Activated CD8-positive, alpha-beta memory T cell treated with anti-CD3 and anti-CD28 coated beads, Interleukin-2, amount 10 ng/mL, durations not matched to agents 7 days and 5 days (primary cell): ENCODE measurements at regions of chr3 and their contacts with region 1.

Region 1: GRCh38 chr3:52220380-52221026 is 4.9 kb downstream of the TLR9 start:
- DNase-seq: peak; percentile 93
- ATAC-seq: peak; percentile 74
- H3K4me3 Mint-ChIP-seq: peak overlapping the region; percentile 48
- H3K27ac Mint-ChIP-seq: peak overlapping the region; percentile 77
- H3K4me1 Mint-ChIP-seq: peaks cover 87% of the 10 kb centered on the region
- H3K27me3 Mint-ChIP-seq: no peaks in the 10 kb centered on the region

Region 2: DNA sequence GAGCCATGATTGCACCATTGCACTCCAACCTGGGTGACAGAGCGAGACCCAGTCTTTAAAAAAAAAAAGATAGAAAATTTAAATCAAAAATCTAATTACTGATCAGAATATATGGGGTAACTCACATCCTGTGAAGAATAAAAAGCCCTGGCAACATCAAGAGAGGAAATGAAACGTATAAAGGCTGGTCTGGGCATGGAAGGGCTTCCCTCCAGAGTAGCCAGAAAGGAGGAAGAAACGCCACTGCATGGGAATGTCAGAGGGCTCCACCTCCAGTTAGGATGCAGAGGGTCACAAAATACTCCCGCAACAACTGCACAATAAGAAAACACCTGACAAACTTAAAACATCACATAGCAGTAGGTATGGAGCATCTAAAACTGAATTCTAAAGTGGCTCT is 312.5 kb before region 1 on chr3:
- CTCF ChIA-PET with region 1: no interaction called
- DNase-seq: no peak
- ATAC-seq: no peak
- H3K4me3 Mint-ChIP-seq: no peak overlapping the region
- H3K27ac Mint-ChIP-seq: no peak overlapping the region
- H3K4me1 Mint-ChIP-seq: no peaks in the 10 kb centered on the region
- H3K27me3 Mint-ChIP-seq: peaks cover 19% of the 10 kb centered on the region

Region 3: GRCh38 chr3:52154117-52155094 is 66.1 kb before region 1 on chr3 and contains the start of gene POC1A:
- CTCF ChIA-PET with region 1: interaction called, 10 read pairs
- DNase-seq: peak; percentile 94
- ATAC-seq: peak; percentile 92
- H3K4me3 Mint-ChIP-seq: peak within 1 kb of the TSS; percentile 93
- H3K27ac Mint-ChIP-seq: peak within 1 kb of the TSS; percentile 91
- H3K4me1 Mint-ChIP-seq: peaks cover 20% of the 10 kb centered on the region
- H3K27me3 Mint-ChIP-seq: no peaks in the 10 kb centered on the region
- total RNA-seq, gene POC1A: 29.3 to 29.5 TPM

Region 4: DNA sequence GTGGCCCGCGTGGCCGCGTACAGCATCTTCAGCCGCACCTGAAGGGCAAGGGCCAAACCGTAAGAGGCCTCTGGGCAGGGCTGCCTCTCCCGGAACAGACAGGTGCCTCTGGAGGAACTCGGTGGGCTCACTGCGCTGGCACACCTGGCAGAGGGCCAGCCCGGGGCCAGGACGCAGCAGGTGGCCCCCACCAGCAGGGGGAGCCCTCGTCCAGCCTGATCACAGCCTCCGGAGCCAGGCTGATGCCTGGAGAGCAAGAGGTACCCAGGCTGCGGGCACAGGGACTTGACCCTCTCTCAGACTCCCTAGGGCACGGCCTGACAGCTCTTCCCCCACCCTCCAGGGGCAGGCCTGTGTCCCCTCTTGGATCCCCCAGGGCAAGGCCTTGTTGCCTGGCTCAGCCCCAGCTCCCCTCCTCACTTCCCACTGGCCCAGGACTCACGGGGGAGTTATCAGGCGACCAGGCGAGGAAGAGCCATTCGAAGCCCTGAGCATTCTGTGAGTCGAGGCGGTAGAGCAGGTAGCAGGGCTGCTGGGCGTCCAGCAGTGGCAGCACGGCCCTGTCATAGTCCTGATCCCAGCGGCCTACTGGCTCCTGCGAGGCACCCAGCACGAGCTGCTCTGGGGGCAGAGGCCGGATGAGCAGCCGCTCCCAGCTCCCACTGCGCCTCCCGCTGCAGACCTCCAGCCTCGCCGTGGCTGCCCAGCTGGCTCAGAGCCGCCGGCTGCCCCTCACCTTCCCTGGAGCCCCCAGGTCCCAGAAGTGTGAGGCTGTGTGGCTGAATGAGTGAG is 11.2 kb after region 1 on chr3:
- CTCF ChIA-PET with region 1: interaction called, 112 read pairs
- DNase-seq: peak; percentile 89
- ATAC-seq: peak; percentile 87
- H3K4me3 Mint-ChIP-seq: no peak overlapping the region
- H3K27ac Mint-ChIP-seq: peak overlapping the region; percentile 57
- H3K4me1 Mint-ChIP-seq: peaks cover 42% of the 10 kb centered on the region
- H3K27me3 Mint-ChIP-seq: no peaks in the 10 kb centered on the region

Region 5: GRCh38 chr3:52253314-52254304 is 33.1 kb after region 1 on chr3:
- CTCF ChIA-PET with region 1: interaction called, 28 read pairs
- DNase-seq: peak; percentile 90
- ATAC-seq: peak; percentile 90
- H3K4me3 Mint-ChIP-seq: peak overlapping the region; percentile 75
- H3K27ac Mint-ChIP-seq: peak overlapping the region; percentile 100
- H3K4me1 Mint-ChIP-seq: peaks cover 89% of the 10 kb centered on the region
- H3K27me3 Mint-ChIP-seq: no peaks in the 10 kb centered on the region

Region 6: GRCh38 chr3:52278510-52279069 is 58.1 kb after region 1 on chr3 and contains the start of gene WDR82:
- CTCF ChIA-PET with region 1: interaction called, 96 read pairs
- DNase-seq: peak; percentile 98
- ATAC-seq: peak; percentile 76
- H3K4me3 Mint-ChIP-seq: peak within 1 kb of the TSS; percentile 99
- H3K27ac Mint-ChIP-seq: peak within 1 kb of the TSS; percentile 98
- H3K4me1 Mint-ChIP-seq: peaks cover 61% of the 10 kb centered on the region
- H3K27me3 Mint-ChIP-seq: no peaks in the 10 kb centered on the region
- total RNA-seq, gene WDR82: 114 to 132 TPM

Region 7: GRCh38 chr3:52317208-52318000 is 96.9 kb after region 1 on chr3:
- CTCF ChIA-PET with region 1: interaction called, 12 read pairs
- DNase-seq: peak; percentile 81
- ATAC-seq: peak; percentile 98
- H3K4me3 Mint-ChIP-seq: peak overlapping the region; percentile 19
- H3K27ac Mint-ChIP-seq: no peak overlapping the region
- H3K4me1 Mint-ChIP-seq: peaks cover 26% of the 10 kb centered on the region
- H3K27me3 Mint-ChIP-seq: no peaks in the 10 kb centered on the region

Region 8: GRCh38 chr3:52352566-52352965 is 132.1 kb after region 1 on chr3:
- CTCF ChIA-PET with region 1: no interaction called
- DNase-seq: no peak
- ATAC-seq: no peak
- H3K4me3 Mint-ChIP-seq: no peak overlapping the region
- H3K27ac Mint-ChIP-seq: no peak overlapping the region
- H3K4me1 Mint-ChIP-seq: no peaks in the 10 kb centered on the region
- H3K27me3 Mint-ChIP-seq: no peaks in the 10 kb centered on the region